HEK293 (cell line): ENCODE measurements at regions of chr6 and their contacts with region 1.

Region 1: GRCh38 chr6:112180095-112180820 is 74.1 kb downstream of the LAMA4 start:
- H3K4me3 ChIP-seq: no peak overlapping the region
- H3K27ac ChIP-seq: no peak overlapping the region
- H3K4me1 ChIP-seq: peaks cover 9% of the 10 kb centered on the region
- CTCF ChIP-seq: peak; percentile 54; the same call in 1 of the 2 replicates

Region 2: DNA sequence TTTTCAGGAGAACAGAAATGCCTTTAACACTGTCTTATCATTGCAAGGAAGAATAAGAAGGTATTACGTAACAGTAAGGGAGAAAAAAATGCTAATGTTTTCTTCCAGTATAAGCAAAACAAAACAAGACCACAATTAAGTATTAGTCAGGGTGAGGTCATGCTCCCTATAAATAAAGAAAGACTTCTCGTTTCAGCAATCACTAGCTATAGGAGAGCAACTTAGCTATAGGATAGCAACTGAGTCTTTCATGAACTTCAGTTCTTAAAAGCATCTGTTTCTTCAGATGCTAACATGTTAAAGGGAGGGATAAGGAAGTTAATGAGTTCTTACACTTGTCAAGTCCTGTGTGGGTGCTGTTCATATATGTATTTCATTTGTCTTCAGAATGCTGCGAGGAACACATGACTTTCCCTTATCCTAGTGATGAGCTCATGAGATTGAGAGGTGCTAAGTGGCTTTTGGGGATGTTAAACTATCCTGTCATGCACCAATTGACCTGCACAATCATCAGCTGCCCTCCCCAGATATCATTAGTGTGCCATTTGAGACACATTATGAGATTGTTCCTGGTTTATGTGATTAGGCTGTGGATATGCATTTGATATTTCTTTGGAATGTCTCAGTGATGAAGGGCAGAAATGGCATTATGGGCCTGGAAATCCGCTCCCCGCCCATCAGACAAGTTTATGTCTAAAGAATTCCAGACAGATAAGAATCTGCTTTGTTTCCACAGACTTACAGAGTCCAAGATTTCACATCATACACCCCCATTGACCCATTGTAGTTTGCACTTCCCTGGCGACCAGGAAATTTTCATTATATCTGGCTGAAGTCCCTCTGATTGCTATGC is 36.7 kb after region 1 on chr6:
- CTCF ChIA-PET with region 1: interaction called, 19 read pairs
- POLR2A ChIA-PET with region 1: interaction called, 3 read pairs
- H3K4me3 ChIP-seq: no peak overlapping the region
- H3K27ac ChIP-seq: peak overlapping the region; percentile 48
- H3K4me1 ChIP-seq: peaks cover 41% of the 10 kb centered on the region
- CTCF ChIP-seq: no peak

Region 3: GRCh38 chr6:112247275-112247674 is 67.0 kb after region 1 on chr6:
- CTCF ChIA-PET with region 1: interaction called, 10 read pairs
- POLR2A ChIA-PET with region 1: no interaction called
- H3K4me3 ChIP-seq: no peak overlapping the region
- H3K27ac ChIP-seq: no peak overlapping the region
- H3K4me1 ChIP-seq: peaks cover 11% of the 10 kb centered on the region; the same call in 1 of the 2 replicates
- CTCF ChIP-seq: no peak

Region 4: DNA sequence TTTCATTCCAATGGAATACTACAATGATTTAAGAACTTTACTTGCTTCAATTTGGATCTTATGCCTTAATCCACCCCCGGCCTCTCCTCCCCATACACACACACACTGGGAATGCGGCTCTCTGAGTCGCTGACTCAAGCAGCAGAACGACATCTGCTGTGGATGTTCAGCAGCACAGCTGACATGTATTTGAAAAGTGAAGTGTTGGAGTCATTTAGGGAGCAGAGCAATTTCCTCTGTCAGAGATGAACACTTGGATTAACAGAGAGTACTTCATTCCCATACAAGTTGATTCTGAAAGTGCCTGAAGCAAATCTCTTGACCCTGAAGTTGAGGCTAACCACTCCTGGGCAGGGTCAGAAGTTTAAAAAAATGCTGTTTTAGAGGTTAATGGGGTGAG is 102.0 kb after region 1 on chr6:
- CTCF ChIA-PET with region 1: interaction called, 46 read pairs
- POLR2A ChIA-PET with region 1: no interaction called
- H3K4me3 ChIP-seq: no peak overlapping the region
- H3K27ac ChIP-seq: no peak overlapping the region
- H3K4me1 ChIP-seq: peaks cover 9% of the 10 kb centered on the region
- CTCF ChIP-seq: peak; percentile 68; the same call in 1 of the 2 replicates

Region 5: DNA sequence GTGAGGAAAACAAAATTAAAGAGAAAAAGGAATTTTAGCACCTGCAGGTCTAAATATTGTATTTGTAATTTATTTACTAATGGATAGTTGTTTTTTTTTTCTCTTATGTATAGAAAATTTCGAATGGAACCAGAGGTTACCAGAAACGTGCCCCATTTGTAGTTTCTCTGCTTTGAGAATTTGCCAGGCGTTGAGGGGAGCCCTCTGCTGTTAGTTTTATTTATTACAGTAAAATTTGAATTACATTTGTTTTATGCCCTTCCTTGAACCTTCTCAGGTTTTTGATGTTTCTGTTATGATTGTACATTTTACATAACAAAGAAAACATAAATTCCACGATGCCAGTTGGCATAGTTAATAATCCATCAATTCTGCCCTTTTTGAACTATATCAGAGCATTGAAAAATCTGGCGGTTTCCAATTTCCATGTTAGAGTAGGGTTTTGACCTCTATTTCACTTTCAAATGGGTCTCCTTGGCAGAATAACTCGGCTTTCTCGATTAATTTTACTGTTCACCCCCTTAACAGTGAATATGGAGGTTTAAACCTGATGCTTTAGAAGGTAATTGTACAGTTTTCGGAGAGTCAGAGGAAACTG is 131.8 kb after region 1 on chr6:
- CTCF ChIA-PET with region 1: interaction called, 160 read pairs
- POLR2A ChIA-PET with region 1: no interaction called
- H3K4me3 ChIP-seq: no peak overlapping the region
- H3K27ac ChIP-seq: no peak overlapping the region
- H3K4me1 ChIP-seq: no peaks in the 10 kb centered on the region
- CTCF ChIP-seq: 0 out of 2 replicates have a peak, but pooled peaks have one; percentile 10

Region 6: GRCh38 chr6:112618849-112619248 is 438.6 kb after region 1 on chr6:
- CTCF ChIA-PET with region 1: no interaction called
- POLR2A ChIA-PET with region 1: no interaction called
- H3K4me3 ChIP-seq: no peak overlapping the region
- H3K27ac ChIP-seq: no peak overlapping the region
- H3K4me1 ChIP-seq: no peaks in the 10 kb centered on the region
- CTCF ChIP-seq: no peak